ENCODE measurements at regions of chr11 and their contacts with region 1.

Region 1: GRCh38 chr11:95150946-95151684 is 61.5 kb downstream of the ENDOD1 start:
- H3K4me3 Mint-ChIP-seq: peak overlapping the region; percentile 86
- H3K27ac Mint-ChIP-seq: peak overlapping the region; percentile 86
- H3K4me1 Mint-ChIP-seq: peaks cover 52% of the 10 kb centered on the region
- H3K27me3 Mint-ChIP-seq: peaks cover 21% of the 10 kb centered on the region

Region 2: GRCh38 chr11:94973099-94973968 is 177.8 kb before region 1 on chr11 and contains the starts of genes CWC15 and KDM4D:
- intact Hi-C with region 1: loop called (anchors 5 kb)
- H3K4me3 Mint-ChIP-seq: peak within 1 kb of the TSS; percentile 97
- H3K27ac Mint-ChIP-seq: peak within 1 kb of the TSS; percentile 97
- H3K4me1 Mint-ChIP-seq: peaks cover 12% of the 10 kb centered on the region
- H3K27me3 Mint-ChIP-seq: peaks cover 7% of the 10 kb centered on the region

Region 3: DNA sequence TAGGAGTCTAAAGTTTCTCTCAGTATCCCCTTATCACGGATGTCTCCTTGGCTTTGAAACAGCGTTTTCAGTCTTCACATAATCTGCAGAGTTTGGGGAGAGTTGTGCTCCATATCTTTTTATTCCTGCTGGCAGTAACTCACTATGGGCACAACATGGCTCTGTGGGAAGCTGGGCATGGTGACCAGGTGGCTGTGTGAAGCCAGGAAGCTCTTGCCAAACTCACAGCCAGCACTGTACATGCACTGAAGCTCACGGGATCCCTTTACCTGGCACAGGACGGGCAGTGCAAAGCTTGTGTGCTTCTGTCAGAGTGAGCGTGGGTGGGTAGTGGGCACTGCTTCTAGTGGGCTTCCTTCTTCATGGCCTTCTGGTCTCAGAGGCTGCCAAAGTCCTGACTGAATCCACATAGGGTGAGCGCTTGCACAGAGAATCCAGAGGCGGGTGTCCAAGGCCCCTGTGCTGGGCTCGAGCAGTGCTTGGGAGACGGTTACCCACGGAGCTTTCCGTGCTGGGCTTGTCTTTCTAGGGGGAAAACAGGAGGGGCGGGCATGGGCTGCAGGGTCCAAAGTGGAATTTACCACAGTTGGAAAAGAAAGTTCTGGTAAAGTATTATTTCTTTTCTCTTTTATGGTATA is 136.8 kb before region 1 on chr11:
- intact Hi-C with region 1: no loop called
- H3K4me3 Mint-ChIP-seq: no peak overlapping the region
- H3K27ac Mint-ChIP-seq: no peak overlapping the region
- H3K4me1 Mint-ChIP-seq: no peaks in the 10 kb centered on the region
- H3K27me3 Mint-ChIP-seq: peaks cover 5% of the 10 kb centered on the region

Region 4: GRCh38 chr11:95705485-95706124 is 554.5 kb after region 1 on chr11:
- intact Hi-C with region 1: loop called (anchors 1 kb)
- H3K4me3 Mint-ChIP-seq: no peak overlapping the region
- H3K27ac Mint-ChIP-seq: no peak overlapping the region
- H3K4me1 Mint-ChIP-seq: no peaks in the 10 kb centered on the region
- H3K27me3 Mint-ChIP-seq: no peaks in the 10 kb centered on the region

Region 5: GRCh38 chr11:95764267-95764898 is 613.3 kb after region 1 on chr11:
- intact Hi-C with region 1: loop called (anchors 1 kb)
- H3K4me3 Mint-ChIP-seq: no peak overlapping the region
- H3K27ac Mint-ChIP-seq: no peak overlapping the region
- H3K4me1 Mint-ChIP-seq: peaks cover 19% of the 10 kb centered on the region
- H3K27me3 Mint-ChIP-seq: no peaks in the 10 kb centered on the region

Region 6: DNA sequence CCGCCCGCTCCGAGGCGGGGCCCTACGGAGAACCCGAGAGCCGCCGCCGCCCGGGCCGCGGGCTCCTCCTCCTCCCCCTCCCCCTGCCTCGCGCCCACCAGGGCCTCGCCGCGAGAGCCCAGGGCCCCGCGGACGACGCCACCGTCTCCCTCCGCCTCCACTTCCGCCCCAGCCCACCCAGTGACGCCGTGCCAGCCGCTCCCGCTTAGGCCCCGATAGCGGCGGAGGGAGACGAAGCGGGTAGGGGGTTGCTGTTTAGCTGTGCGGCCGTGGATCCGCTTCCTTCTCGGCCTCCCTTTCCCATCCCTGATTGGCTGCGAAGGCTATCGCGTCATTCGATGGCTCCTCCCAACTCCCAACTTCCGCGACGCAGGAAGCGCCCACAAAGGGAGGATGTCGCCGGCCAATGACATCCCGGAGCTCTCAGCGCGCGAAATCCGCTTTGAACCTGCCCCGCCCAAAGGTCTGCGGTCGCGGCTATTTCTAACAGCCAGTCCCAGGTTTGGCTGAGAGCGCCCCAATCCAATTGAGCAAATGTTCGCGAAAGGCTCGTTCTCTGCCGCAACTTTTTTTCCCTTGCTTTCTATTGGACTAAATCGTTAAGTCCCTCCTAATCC is 638.5 kb after region 1 on chr11 and contains the start of gene FAM76B:
- intact Hi-C with region 1: loop called (anchors 1 kb)
- H3K4me3 Mint-ChIP-seq: peak within 1 kb of the TSS; percentile 99
- H3K27ac Mint-ChIP-seq: peak within 1 kb of the TSS; percentile 100
- H3K4me1 Mint-ChIP-seq: peaks cover 31% of the 10 kb centered on the region
- H3K27me3 Mint-ChIP-seq: no peaks in the 10 kb centered on the region